ENCODE measurements at regions of chr11 and their contacts with region 1.

Region 1: GRCh38 chr11:71977743-71978418 is 20.8 kb upstream of the IL18BP start:
- DNase-seq: peak; percentile 68
- H3K4me3 ChIP-seq: no peak overlapping the region
- H3K27ac ChIP-seq: peak overlapping the region in 1 of 4 donors; percentile 32
- H3K4me1 ChIP-seq: peaks cover 0 to 16% (median 4%) of the 10 kb centered on the region in 4 donors
- H3K27me3 ChIP-seq: no peaks in the 10 kb centered on the region
- CTCF ChIP-seq: peak; percentile 47 to 72 (median 67)
- EP300 ChIP-seq: no peak
- POLR2A ChIP-seq: no peak

Region 2: DNA sequence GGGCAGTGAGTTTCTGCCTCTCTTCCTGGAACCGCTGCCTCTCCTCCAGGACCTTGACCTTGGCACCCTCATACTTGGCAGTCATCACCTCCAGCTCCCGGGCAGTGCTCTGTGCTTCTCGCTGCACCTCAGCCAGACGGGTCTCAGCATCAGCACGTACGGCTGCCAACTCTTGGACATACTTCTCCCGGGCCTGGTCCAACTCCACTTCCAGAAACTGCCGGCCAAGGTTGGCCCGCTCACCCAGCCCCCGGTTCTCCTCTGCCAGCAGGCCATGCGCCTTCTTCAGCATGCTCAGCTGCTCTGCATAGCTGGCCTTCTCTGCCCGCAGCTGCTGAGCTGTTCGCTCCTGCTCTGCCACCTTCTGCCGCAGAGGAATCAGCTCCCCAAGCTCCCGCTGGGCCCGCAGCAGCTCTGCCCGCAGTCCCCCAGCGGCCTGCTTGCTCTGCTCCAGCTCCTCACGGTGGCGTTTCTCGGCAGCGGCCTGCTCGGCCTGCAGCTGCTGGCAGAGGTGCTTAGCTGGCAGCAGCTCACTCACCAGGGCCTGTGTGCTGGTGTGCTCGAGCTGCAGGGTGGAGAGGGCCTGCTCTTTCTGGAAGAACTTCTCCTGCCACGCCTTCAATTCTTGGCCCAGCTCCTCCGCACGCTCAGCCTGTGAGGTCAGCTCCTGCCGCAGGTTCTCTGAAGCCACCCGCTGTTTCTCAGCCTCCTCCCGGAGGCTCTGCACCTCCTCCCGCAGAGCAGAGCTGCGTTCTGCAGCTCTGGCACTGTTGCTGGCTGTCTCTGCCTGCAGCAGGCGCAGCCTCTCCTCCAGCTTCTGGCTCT is 35.2 kb after region 1 on chr11:
- intact Hi-C with region 1: loop called (anchors 5 kb)
- DNase-seq: peak; percentile 89
- H3K4me3 ChIP-seq: no peak overlapping the region
- H3K27ac ChIP-seq: peak overlapping the region; percentile 67 to 79 (median 72)
- H3K4me1 ChIP-seq: peaks cover 0 to 59% (median 51%) of the 10 kb centered on the region in 4 donors
- H3K27me3 ChIP-seq: no peaks in the 10 kb centered on the region
- CTCF ChIP-seq: no peak
- EP300 ChIP-seq: no peak
- POLR2A ChIP-seq: no peak

Region 3: GRCh38 chr11:72091005-72091691 is 113.3 kb after region 1 on chr11:
- intact Hi-C with region 1: loop called (anchors 5 kb)
- DNase-seq: peak; percentile 83
- H3K4me3 ChIP-seq: no peak overlapping the region
- H3K27ac ChIP-seq: peak overlapping the region; percentile 14 to 62 (median 58)
- H3K4me1 ChIP-seq: peaks cover 0 to 13% (median 10%) of the 10 kb centered on the region in 4 donors
- H3K27me3 ChIP-seq: no peaks in the 10 kb centered on the region
- CTCF ChIP-seq: peak; percentile 88 to 94 (median 90)
- EP300 ChIP-seq: no peak
- POLR2A ChIP-seq: no peak

Region 4: GRCh38 chr11:72144807-72145560 is 167.1 kb after region 1 on chr11:
- intact Hi-C with region 1: loop called (anchors 2 kb)
- DNase-seq: no peak
- H3K4me3 ChIP-seq: no peak overlapping the region
- H3K27ac ChIP-seq: no peak overlapping the region
- H3K4me1 ChIP-seq: no peaks in the 10 kb centered on the region
- H3K27me3 ChIP-seq: no peaks in the 10 kb centered on the region
- CTCF ChIP-seq: no peak
- EP300 ChIP-seq: no peak
- POLR2A ChIP-seq: no peak

Region 5: GRCh38 chr11:72413914-72414628 is 436.2 kb after region 1 on chr11:
- intact Hi-C with region 1: loop called (anchors 10 kb)
- DNase-seq: peak; percentile 92
- H3K4me3 ChIP-seq: no peak overlapping the region
- H3K27ac ChIP-seq: peak overlapping the region in 1 of 4 donors; percentile 22
- H3K4me1 ChIP-seq: peaks cover 0 to 24% (median 16%) of the 10 kb centered on the region in 4 donors
- H3K27me3 ChIP-seq: no peaks in the 10 kb centered on the region
- CTCF ChIP-seq: peak; percentile 65 to 88 (median 78)
- EP300 ChIP-seq: no peak
- POLR2A ChIP-seq: no peak